ENCODE measurements at regions of chr9 and their contacts with region 1.

Region 1: GRCh38 chr9:35756275-35757225 is 2.5 kb upstream of the MSMP start:
- DNase-seq: peak; percentile 84
- ATAC-seq: peak; percentile 80
- H3K4me3 ChIP-seq: peak overlapping the region; percentile 39 to 85 (median 81)
- H3K4me3 Mint-ChIP-seq: peak overlapping the region; percentile 93
- H3K27ac ChIP-seq: peak overlapping the region; percentile 92 to 94
- H3K27ac Mint-ChIP-seq: peak overlapping the region; percentile 97
- H3K4me1 ChIP-seq: peaks cover 34 to 44% of the 10 kb centered on the region in 2 donors
- H3K4me1 Mint-ChIP-seq: peaks cover 65% of the 10 kb centered on the region
- H3K27me3 ChIP-seq: no peaks in the 10 kb centered on the region
- H3K27me3 Mint-ChIP-seq: no peaks in the 10 kb centered on the region
- CTCF ChIP-seq: peak; percentile 70

Region 2: DNA sequence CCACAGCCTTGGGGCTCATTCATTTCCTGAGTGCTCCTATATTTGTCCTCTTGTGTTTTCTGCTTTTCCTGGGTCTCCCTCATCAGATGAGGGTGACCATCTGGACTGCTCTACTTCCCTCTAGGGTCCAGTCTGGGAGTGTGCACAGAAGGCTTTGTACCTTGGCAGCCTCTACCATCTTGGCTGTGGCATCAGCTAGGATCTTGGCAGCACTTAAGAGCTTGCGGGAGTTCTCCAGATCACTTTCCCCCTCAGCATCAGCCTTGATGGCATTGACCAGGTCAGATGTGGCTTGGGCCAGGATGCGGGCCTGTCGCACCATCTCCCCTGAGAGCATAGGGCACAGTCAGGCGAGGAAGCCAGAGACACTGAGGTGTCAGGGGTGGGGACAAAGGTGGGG is 40.3 kb before region 1 on chr9:
- CTCF ChIA-PET with region 1: interaction called, 4 read pairs
- POLR2A ChIA-PET with region 1: no interaction called
- intact Hi-C with region 1: loop called (anchors 2 kb)
- DNase-seq: no peak
- ATAC-seq: no peak
- H3K4me3 ChIP-seq: no peak overlapping the region
- H3K4me3 Mint-ChIP-seq: no peak overlapping the region
- H3K27ac ChIP-seq: no peak overlapping the region
- H3K27ac Mint-ChIP-seq: peak overlapping the region; percentile 65
- H3K4me1 ChIP-seq: peaks cover 16 to 24% of the 10 kb centered on the region in 2 donors
- H3K4me1 Mint-ChIP-seq: peaks cover 26% of the 10 kb centered on the region
- H3K27me3 ChIP-seq: no peaks in the 10 kb centered on the region
- H3K27me3 Mint-ChIP-seq: no peaks in the 10 kb centered on the region
- CTCF ChIP-seq: no peak

Region 3: DNA sequence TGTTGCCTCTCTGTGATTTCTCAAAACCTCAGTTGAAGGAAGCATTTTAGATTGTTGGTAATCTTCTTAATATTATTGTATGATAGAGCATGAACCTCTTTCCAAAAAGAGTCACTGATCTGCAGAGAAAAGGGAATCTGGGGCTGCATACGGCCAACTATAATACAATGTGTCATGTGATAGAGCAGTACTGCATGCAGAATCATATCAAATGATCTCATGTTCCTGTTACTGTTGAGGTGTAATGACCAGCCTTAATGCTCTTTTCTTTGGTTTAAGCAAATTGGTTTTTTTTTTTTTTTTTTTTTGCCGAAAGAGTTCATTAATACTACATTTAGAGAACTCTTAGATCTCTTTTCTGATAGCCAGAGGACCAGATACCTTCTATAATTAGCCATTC is 10.4 kb after region 1 on chr9:
- CTCF ChIA-PET with region 1: interaction called, 3 read pairs
- POLR2A ChIA-PET with region 1: interaction called, 11 read pairs
- intact Hi-C with region 1: no loop called
- DNase-seq: no peak
- ATAC-seq: no peak
- H3K4me3 ChIP-seq: no peak overlapping the region
- H3K4me3 Mint-ChIP-seq: no peak overlapping the region
- H3K27ac ChIP-seq: no peak overlapping the region
- H3K27ac Mint-ChIP-seq: no peak overlapping the region
- H3K4me1 ChIP-seq: no peaks in the 10 kb centered on the region
- H3K4me1 Mint-ChIP-seq: peaks cover 15% of the 10 kb centered on the region
- H3K27me3 ChIP-seq: no peaks in the 10 kb centered on the region
- H3K27me3 Mint-ChIP-seq: no peaks in the 10 kb centered on the region
- CTCF ChIP-seq: no peak

Region 4: GRCh38 chr9:35774907-35775635 is 18.5 kb after region 1 on chr9:
- CTCF ChIA-PET with region 1: interaction called, 11 read pairs
- POLR2A ChIA-PET with region 1: interaction called, 3 read pairs
- intact Hi-C with region 1: no loop called
- DNase-seq: no peak
- ATAC-seq: no peak
- H3K4me3 ChIP-seq: no peak overlapping the region
- H3K4me3 Mint-ChIP-seq: peak overlapping the region; percentile 16
- H3K27ac ChIP-seq: peak overlapping the region in 1 of 2 donors; percentile 11
- H3K27ac Mint-ChIP-seq: peak overlapping the region; percentile 85
- H3K4me1 ChIP-seq: peaks cover 6 to 15% of the 10 kb centered on the region in 2 donors
- H3K4me1 Mint-ChIP-seq: peaks cover 15% of the 10 kb centered on the region
- H3K27me3 ChIP-seq: no peaks in the 10 kb centered on the region
- H3K27me3 Mint-ChIP-seq: no peaks in the 10 kb centered on the region
- CTCF ChIP-seq: no peak

Measured in B cell (primary cell).